HepG2 (cell line): ENCODE measurements at regions of chr9 and their contacts with region 1.

Region 1: DNA sequence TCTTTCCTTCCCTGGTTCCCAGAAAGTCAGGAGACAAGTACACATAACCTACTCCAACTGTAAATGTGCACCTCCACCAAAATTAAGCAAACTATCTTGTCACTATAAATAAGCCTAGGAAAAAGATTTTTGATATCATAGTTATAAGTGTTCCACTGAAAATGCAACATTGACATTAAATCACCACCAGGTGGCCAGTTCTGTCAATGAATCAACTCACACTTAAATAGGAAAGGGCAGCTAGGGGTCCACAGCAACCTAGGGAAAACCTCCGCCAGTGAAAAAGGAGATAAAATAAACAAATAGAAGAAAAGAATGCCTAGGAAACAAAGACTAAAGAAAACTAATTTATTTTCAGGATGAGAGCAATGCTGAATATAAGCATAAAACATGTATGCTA is 243.1 kb upstream of the PTPRD start:
- DNase-seq: no peak
- ATAC-seq: no peak
- H3K4me3 ChIP-seq: no peak overlapping the region
- H3K27ac ChIP-seq: no peak overlapping the region
- H3K4me1 ChIP-seq: no peaks in the 10 kb centered on the region
- H3K27me3 ChIP-seq: no peaks in the 10 kb centered on the region
- CTCF ChIP-seq: no peak
- EP300 ChIP-seq: no peak
- POLR2A ChIP-seq: no peak
- RAD21 ChIP-seq: no peak

Region 2: GRCh38 chr9:10479172-10479571 is 376.7 kb before region 1 on chr9:
- CTCF ChIA-PET with region 1: no interaction called
- POLR2A ChIA-PET with region 1: no interaction called
- in situ Hi-C with region 1: no loop called
- intact Hi-C with region 1: loop called (anchors 5 kb)
- DNase-seq: peak; percentile 5
- ATAC-seq: peak; percentile 35; the same call in 1 of the 3 replicates
- H3K4me3 ChIP-seq: no peak overlapping the region
- H3K27ac ChIP-seq: no peak overlapping the region
- H3K4me1 ChIP-seq: no peaks in the 10 kb centered on the region
- H3K27me3 ChIP-seq: no peaks in the 10 kb centered on the region
- CTCF ChIP-seq: no peak
- EP300 ChIP-seq: no peak
- POLR2A ChIP-seq: no peak
- RAD21 ChIP-seq: no peak

Region 3: GRCh38 chr9:10983251-10983650 is 127.4 kb after region 1 on chr9:
- CTCF ChIA-PET with region 1: no interaction called
- POLR2A ChIA-PET with region 1: no interaction called
- in situ Hi-C with region 1: no loop called
- intact Hi-C with region 1: no loop called
- DNase-seq: no peak
- ATAC-seq: no peak
- H3K4me3 ChIP-seq: no peak overlapping the region
- H3K27ac ChIP-seq: no peak overlapping the region
- H3K4me1 ChIP-seq: no peaks in the 10 kb centered on the region
- H3K27me3 ChIP-seq: no peaks in the 10 kb centered on the region
- CTCF ChIP-seq: no peak
- EP300 ChIP-seq: no peak
- POLR2A ChIP-seq: no peak
- RAD21 ChIP-seq: no peak